ENCODE measurements at regions of chr19 and their contacts with region 1.

Region 1: GRCh38 chr19:55385353-55385739 is 386 bp upstream of the RPL28 start:
- DNase-seq: peak; percentile 98
- H3K4me3 Mint-ChIP-seq: peak overlapping the region; percentile 97
- H3K27ac Mint-ChIP-seq: peak overlapping the region; percentile 97
- H3K4me1 Mint-ChIP-seq: peaks cover 71% of the 10 kb centered on the region
- H3K27me3 Mint-ChIP-seq: no peaks in the 10 kb centered on the region

Region 2: GRCh38 chr19:55289117-55289796 is 96.1 kb before region 1 on chr19:
- CTCF ChIA-PET with region 1: interaction called, 13 read pairs
- DNase-seq: no peak
- H3K4me3 Mint-ChIP-seq: no peak overlapping the region
- H3K27ac Mint-ChIP-seq: no peak overlapping the region
- H3K4me1 Mint-ChIP-seq: peaks cover 9% of the 10 kb centered on the region
- H3K27me3 Mint-ChIP-seq: peaks cover 5% of the 10 kb centered on the region

Region 3: GRCh38 chr19:55358943-55359633 is 26.3 kb before region 1 on chr19:
- CTCF ChIA-PET with region 1: no interaction called
- DNase-seq: no peak
- H3K4me3 Mint-ChIP-seq: no peak overlapping the region
- H3K27ac Mint-ChIP-seq: no peak overlapping the region
- H3K4me1 Mint-ChIP-seq: peaks cover 4% of the 10 kb centered on the region
- H3K27me3 Mint-ChIP-seq: peaks cover 52% of the 10 kb centered on the region

Region 4: GRCh38 chr19:55369671-55370304 is 15.6 kb before region 1 on chr19:
- CTCF ChIA-PET with region 1: no interaction called
- DNase-seq: peak; percentile 44
- H3K4me3 Mint-ChIP-seq: peak overlapping the region; percentile 21
- H3K27ac Mint-ChIP-seq: no peak overlapping the region
- H3K4me1 Mint-ChIP-seq: peaks cover 9% of the 10 kb centered on the region
- H3K27me3 Mint-ChIP-seq: peaks cover 91% of the 10 kb centered on the region

Region 5: GRCh38 chr19:55578031-55578760 is 192.8 kb after region 1 on chr19:
- CTCF ChIA-PET with region 1: no interaction called
- DNase-seq: no peak
- H3K4me3 Mint-ChIP-seq: no peak overlapping the region
- H3K27ac Mint-ChIP-seq: no peak overlapping the region
- H3K4me1 Mint-ChIP-seq: peaks cover 15% of the 10 kb centered on the region
- H3K27me3 Mint-ChIP-seq: peaks cover 5% of the 10 kb centered on the region

Measured in activated naive CD4-positive, alpha-beta T cell treated with anti-CD3 and anti-CD28 coated beads, Interleukin-2, amount 10 ng/mL, durations not matched to agents 7 days and 5 days (primary cell).